ENCODE measurements at regions of chr15 and their contacts with region 1.

Region 1: GRCh38 chr15:91302588-91303439 is 202.8 kb downstream of the SV2B start:
- DNase-seq: peak; percentile 66
- CTCF ChIP-seq: peak; percentile 45

Region 2: GRCh38 chr15:89723031-89723430 is 1579.8 kb before region 1 on chr15:
- in situ Hi-C with region 1: no loop called
- DNase-seq: no peak
- CTCF ChIP-seq: no peak

Region 3: DNA sequence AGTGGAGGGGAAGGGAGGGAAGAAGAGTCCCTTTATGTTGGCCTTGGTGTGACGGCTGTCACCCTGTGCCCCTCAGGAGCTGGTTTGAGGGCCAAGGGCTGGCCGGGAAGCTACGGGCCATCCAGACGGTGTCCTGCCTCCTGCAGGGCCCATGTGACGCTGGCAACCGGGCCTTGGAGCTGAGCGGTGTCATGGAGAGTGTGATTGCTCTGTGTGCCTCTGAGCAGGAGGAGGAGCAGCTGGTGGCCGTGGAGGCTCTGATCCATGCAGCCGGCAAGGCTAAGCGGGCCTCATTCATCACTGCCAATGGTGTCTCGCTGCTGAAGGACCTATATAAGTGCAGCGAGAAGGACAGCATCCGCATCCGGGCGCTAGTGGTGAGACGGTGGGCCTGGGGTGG is 356.3 kb before region 1 on chr15:
- in situ Hi-C with region 1: no loop called
- DNase-seq: no peak
- CTCF ChIP-seq: no peak

Region 4: GRCh38 chr15:91199511-91199910 is 103.3 kb before region 1 on chr15:
- in situ Hi-C with region 1: no loop called
- DNase-seq: no peak
- CTCF ChIP-seq: no peak

Region 5: DNA sequence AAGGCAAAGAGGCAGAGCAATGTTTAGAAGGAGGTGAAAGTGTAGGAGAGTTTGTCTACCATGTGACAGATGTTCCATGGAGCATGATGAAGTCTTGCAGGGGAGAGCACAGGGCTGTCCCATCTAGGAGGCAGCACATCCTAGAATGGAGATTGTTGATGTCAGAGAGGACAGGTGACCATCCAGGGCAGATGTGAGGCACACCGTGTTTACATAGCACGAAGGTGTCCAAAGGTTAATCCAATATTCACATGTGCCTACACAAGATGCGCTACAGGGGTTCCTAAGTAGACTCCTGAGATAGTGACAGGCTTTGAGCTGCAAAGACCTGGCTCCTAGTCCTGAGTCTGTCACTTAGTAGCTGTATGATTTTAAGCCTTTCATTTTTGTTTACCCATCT is 331.4 kb after region 1 on chr15:
- in situ Hi-C with region 1: no loop called
- DNase-seq: no peak
- CTCF ChIP-seq: no peak

Region 6: DNA sequence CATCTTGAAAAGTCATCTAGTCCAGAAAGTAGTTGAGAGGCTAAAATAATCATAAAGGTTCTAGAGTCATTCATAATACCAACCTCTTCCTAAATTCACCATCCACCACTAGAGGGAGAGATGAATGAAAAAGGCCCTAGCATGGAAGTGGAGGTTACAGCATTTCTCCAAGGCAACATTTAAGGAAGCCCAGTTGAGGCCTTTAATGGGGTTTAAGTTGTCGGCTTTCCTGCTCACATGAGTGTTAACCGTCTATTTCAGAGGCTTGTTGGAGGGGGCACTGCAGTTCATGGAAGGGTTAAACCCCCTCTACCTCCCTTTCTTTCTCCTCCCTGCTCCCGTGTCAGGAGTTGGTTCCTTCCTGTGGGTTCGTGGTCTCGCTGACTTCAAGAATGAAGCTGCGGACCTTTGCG is 546.9 kb after region 1 on chr15:
- in situ Hi-C with region 1: loop called (anchors 25 kb)
- DNase-seq: no peak
- CTCF ChIP-seq: no peak

Region 7: GRCh38 chr15:92077353-92078085 is 774.7 kb after region 1 on chr15:
- in situ Hi-C with region 1: loop called (anchors 10 kb)
- DNase-seq: peak; percentile 72
- CTCF ChIP-seq: peak; percentile 57

Measured in GM13976 (cell line).